Adrenal gland (tissue), 19 donors: ENCODE measurements at regions of chr1 and their contacts with region 1.

Region 1: GRCh38 chr1:2642560-2643413 is 10.0 kb upstream of the MMEL1 start:
- DNase-seq: peak; percentile 91 to 97 (median 93)
- H3K4me3 ChIP-seq: peak overlapping the region; percentile 53 to 77 (median 64)
- H3K27ac ChIP-seq: peak overlapping the region in 4 of 5 donors; percentile 36 to 78 (median 72)
- H3K4me1 ChIP-seq: peaks cover 14 to 15% of the 10 kb centered on the region in 2 donors
- H3K27me3 ChIP-seq: no peaks in the 10 kb centered on the region
- CTCF ChIP-seq: peak in 3 of 6 experiments; percentile 12 to 22 (median 13)
- POLR2A ChIP-seq: peak in 1 of 2 donors; percentile 70

Region 2: DNA sequence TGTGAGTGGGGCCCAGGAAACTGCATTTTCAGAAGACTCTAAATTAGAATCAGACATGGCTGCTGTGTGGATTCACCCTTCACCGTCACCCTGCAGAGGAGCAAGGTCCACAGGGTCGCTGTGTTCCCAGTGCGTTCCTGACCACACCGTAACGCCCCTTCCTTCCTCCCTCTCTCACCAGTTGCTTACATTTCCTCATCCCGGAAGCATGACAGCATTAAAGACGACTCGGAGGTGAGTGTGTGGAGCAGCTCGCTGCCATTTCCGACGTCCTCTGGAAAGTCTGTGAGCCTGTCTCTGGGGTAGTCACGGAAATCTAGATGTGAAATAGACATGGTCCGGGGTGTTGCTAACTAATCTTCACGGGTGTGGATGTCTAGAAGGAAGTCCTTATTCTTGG is 494.1 kb before region 1 on chr1:
- intact Hi-C with region 1: no loop called
- DNase-seq: peak in 2 of 7 donors; percentile 48 to 72
- H3K4me3 ChIP-seq: no peak overlapping the region
- H3K27ac ChIP-seq: peak overlapping the region in 1 of 5 donors; percentile 57
- H3K4me1 ChIP-seq: no peaks in the 10 kb centered on the region
- H3K27me3 ChIP-seq: no peaks in the 10 kb centered on the region
- CTCF ChIP-seq: no peak
- POLR2A ChIP-seq: no peak

Region 3: GRCh38 chr1:2583865-2584351 is 58.9 kb before region 1 on chr1:
- intact Hi-C with region 1: loop called in 1 of 2 experiments (anchors 5 kb)
- DNase-seq: peak in 1 of 7 donors; percentile 10
- H3K4me3 ChIP-seq: no peak overlapping the region
- H3K27ac ChIP-seq: no peak overlapping the region
- H3K4me1 ChIP-seq: peaks cover 17 to 25% of the 10 kb centered on the region in 2 donors
- H3K27me3 ChIP-seq: no peaks in the 10 kb centered on the region
- CTCF ChIP-seq: no peak
- POLR2A ChIP-seq: no peak

Region 4: GRCh38 chr1:2936559-2937515 is 294.1 kb after region 1 on chr1:
- intact Hi-C with region 1: no loop called
- DNase-seq: no peak
- H3K4me3 ChIP-seq: no peak overlapping the region
- H3K27ac ChIP-seq: no peak overlapping the region
- H3K4me1 ChIP-seq: no peaks in the 10 kb centered on the region
- H3K27me3 ChIP-seq: no peaks in the 10 kb centered on the region
- CTCF ChIP-seq: no peak
- POLR2A ChIP-seq: no peak